ENCODE measurements at regions of chr15 and their contacts with region 1.

Region 1: GRCh38 chr15:38817427-38818156 is 253.0 kb upstream of the RASGRP1 start:
- DNase-seq: peak; percentile 76
- H3K4me3 ChIP-seq: peak overlapping the region in 1 of 2 experiments; percentile 29; a peak in 1 of 4 replicates
- H3K27ac ChIP-seq: peak overlapping the region; percentile 72 to 93
- H3K4me1 ChIP-seq: peaks cover 10 to 25% of the 10 kb centered on the region in 2 experiments; a peak in 3 of 4 replicates
- H3K27me3 ChIP-seq: no peaks in the 10 kb centered on the region
- CTCF ChIP-seq: peak; percentile 100
- EP300 ChIP-seq: peak; percentile 82 to 87; a peak in 3 of 4 replicates
- RAD21 ChIP-seq: peak; percentile 96

Region 2: DNA sequence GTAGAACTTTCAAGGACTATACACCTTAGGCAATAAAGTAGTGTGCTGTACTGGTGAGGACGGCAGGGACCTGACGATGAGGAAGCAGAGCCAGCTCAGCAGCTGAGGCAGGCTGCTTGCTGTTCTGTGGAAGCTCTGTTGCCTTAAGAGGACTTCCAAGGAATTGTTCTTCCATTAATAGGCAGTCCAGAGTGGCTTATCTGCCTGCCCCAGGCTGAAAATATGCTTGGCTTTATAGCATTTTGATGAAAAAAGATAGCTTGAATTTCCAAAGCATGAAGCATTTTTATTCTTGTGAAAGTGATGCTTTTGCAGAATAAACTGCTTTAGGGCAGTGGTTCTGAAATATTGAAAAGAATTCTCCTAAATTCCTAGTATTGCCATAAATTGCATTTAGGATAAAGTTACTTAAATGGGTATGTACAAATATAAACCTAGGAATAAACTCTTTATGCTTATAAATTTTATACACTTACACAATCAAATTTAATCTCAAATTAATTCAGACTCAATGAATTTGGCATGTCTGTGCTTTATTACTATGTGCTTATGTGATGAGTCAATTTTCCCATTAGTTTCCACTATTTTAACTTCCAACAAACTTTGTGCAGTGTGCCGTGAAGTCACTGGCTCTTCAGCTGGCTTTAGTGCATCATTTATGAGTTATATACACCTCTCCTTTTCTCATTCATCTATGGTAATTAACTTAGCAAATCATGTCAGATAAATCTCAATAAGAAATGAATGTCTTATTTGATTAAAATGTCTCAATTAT is 21.9 kb before region 1 on chr15:
- CTCF ChIA-PET with region 1: interaction called, 12 read pairs
- POLR2A ChIA-PET with region 1: no interaction called
- DNase-seq: no peak
- H3K4me3 ChIP-seq: no peak overlapping the region
- H3K27ac ChIP-seq: no peak overlapping the region
- H3K4me1 ChIP-seq: peaks cover 3 to 7% of the 10 kb centered on the region in 2 experiments; a peak in 1 of 4 replicates
- H3K27me3 ChIP-seq: no peaks in the 10 kb centered on the region
- CTCF ChIP-seq: no peak
- EP300 ChIP-seq: no peak
- RAD21 ChIP-seq: no peak

Region 3: DNA sequence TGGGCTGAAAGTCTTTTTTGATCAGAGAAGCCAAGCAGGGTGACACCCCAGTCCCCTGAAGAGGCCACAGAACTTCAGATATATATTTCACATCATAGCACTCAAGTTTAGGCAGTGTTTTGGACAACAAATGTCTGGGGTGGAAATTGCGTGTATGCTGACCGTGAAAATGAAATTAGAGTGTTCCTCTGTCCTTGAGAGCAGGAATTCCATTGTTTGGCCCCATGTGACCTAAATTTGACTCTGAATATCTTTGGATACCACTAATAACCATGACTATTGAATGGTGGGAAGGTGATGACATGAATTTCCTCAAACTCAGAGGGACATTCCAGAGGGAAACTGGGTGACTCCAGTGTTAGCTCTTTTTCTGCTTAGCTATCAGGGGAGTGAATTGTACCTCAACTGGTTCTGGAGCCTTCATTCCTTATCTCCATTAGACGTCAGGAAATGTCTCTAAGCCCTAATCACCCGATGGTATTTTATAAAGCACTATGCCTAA is 10.5 kb after region 1 on chr15:
- CTCF ChIA-PET with region 1: interaction called, 10 read pairs
- POLR2A ChIA-PET with region 1: no interaction called
- DNase-seq: no peak
- H3K4me3 ChIP-seq: no peak overlapping the region
- H3K27ac ChIP-seq: no peak overlapping the region
- H3K4me1 ChIP-seq: no peaks in the 10 kb centered on the region; a peak in 2 of 4 replicates
- H3K27me3 ChIP-seq: no peaks in the 10 kb centered on the region
- CTCF ChIP-seq: no peak
- EP300 ChIP-seq: no peak
- RAD21 ChIP-seq: no peak

Region 4: GRCh38 chr15:38878926-38879325 is 61.3 kb after region 1 on chr15:
- CTCF ChIA-PET with region 1: no interaction called
- POLR2A ChIA-PET with region 1: no interaction called
- DNase-seq: no peak
- H3K4me3 ChIP-seq: no peak overlapping the region
- H3K27ac ChIP-seq: peak overlapping the region; percentile 71 to 92
- H3K4me1 ChIP-seq: peaks cover 23 to 40% of the 10 kb centered on the region in 2 experiments; a peak in 3 of 4 replicates
- H3K27me3 ChIP-seq: no peaks in the 10 kb centered on the region
- CTCF ChIP-seq: no peak
- EP300 ChIP-seq: peak in 1 of 2 experiments; percentile 14; a peak in 1 of 4 replicates
- RAD21 ChIP-seq: peak; percentile 17; the same call in 1 of the 2 replicates

Region 5: GRCh38 chr15:38899300-38899699 is 81.7 kb after region 1 on chr15:
- CTCF ChIA-PET with region 1: no interaction called
- POLR2A ChIA-PET with region 1: no interaction called
- DNase-seq: no peak
- H3K4me3 ChIP-seq: no peak overlapping the region
- H3K27ac ChIP-seq: peak overlapping the region; percentile 31 to 45; a peak in 3 of 4 replicates
- H3K4me1 ChIP-seq: peaks cover 10 to 14% of the 10 kb centered on the region in 2 experiments
- H3K27me3 ChIP-seq: no peaks in the 10 kb centered on the region
- CTCF ChIP-seq: no peak
- EP300 ChIP-seq: no peak
- RAD21 ChIP-seq: no peak

Region 6: DNA sequence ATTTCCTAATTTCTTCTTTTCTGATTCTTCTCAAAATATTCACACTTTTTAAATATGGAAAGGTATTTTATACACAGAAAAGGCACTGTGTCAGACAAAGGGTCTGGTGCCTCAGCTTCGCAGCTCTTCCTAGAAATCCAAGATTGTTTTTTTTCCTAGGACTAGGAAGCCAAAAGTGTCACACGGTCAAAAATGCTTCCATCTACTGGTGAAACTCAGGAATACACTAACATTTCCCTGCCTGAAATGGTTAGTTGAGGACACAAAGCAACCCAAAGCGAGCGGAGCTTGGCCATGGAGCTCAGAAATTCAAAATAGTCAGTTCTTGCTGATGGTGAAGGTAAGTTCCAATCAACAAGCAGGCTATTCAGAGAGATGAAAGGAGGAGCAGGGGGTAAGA is 173.5 kb after region 1 on chr15:
- CTCF ChIA-PET with region 1: interaction called, 27 read pairs
- POLR2A ChIA-PET with region 1: no interaction called
- DNase-seq: peak; percentile 36
- H3K4me3 ChIP-seq: no peak overlapping the region
- H3K27ac ChIP-seq: peak overlapping the region; percentile 16 to 48
- H3K4me1 ChIP-seq: peaks cover 9 to 18% of the 10 kb centered on the region in 2 experiments; a peak in 3 of 4 replicates
- H3K27me3 ChIP-seq: no peaks in the 10 kb centered on the region
- CTCF ChIP-seq: peak; percentile 64
- EP300 ChIP-seq: no peak
- RAD21 ChIP-seq: peak; percentile 71

Measured in SK-N-SH (cell line).